CD4-positive, alpha-beta T cell (primary cell): ENCODE measurements at regions of chr13 and their contacts with region 1.

Region 1: GRCh38 chr13:107642831-107643230 is 572.5 kb downstream of the LIG4 start:
- DNase-seq: no peak
- ATAC-seq: no peak
- H3K4me3 ChIP-seq: no peak overlapping the region
- H3K4me3 Mint-ChIP-seq: no peak overlapping the region
- H3K27ac ChIP-seq: no peak overlapping the region
- H3K27ac Mint-ChIP-seq: no peak overlapping the region
- H3K4me1 ChIP-seq: no peaks in the 10 kb centered on the region
- H3K4me1 Mint-ChIP-seq: no peaks in the 10 kb centered on the region
- H3K27me3 ChIP-seq: no peaks in the 10 kb centered on the region
- H3K27me3 Mint-ChIP-seq: no peaks in the 10 kb centered on the region
- CTCF ChIP-seq: no peak

Region 2: GRCh38 chr13:107211073-107211472 is 431.8 kb before region 1 on chr13:
- CTCF ChIA-PET with region 1: no interaction called
- POLR2A ChIA-PET with region 1: no interaction called
- intact Hi-C with region 1: loop called in 1 of 2 experiments (anchors 10 kb)
- DNase-seq: peak in 9 of 14 experiments; percentile 9 to 48 (median 14)
- ATAC-seq: peak; percentile 41
- H3K4me3 ChIP-seq: no peak overlapping the region
- H3K4me3 Mint-ChIP-seq: no peak overlapping the region
- H3K27ac ChIP-seq: no peak overlapping the region
- H3K27ac Mint-ChIP-seq: no peak overlapping the region
- H3K4me1 ChIP-seq: no peaks in the 10 kb centered on the region
- H3K4me1 Mint-ChIP-seq: no peaks in the 10 kb centered on the region
- H3K27me3 ChIP-seq: no peaks in the 10 kb centered on the region
- H3K27me3 Mint-ChIP-seq: peaks cover 5% of the 10 kb centered on the region
- CTCF ChIP-seq: peak; percentile 64

Region 3: DNA sequence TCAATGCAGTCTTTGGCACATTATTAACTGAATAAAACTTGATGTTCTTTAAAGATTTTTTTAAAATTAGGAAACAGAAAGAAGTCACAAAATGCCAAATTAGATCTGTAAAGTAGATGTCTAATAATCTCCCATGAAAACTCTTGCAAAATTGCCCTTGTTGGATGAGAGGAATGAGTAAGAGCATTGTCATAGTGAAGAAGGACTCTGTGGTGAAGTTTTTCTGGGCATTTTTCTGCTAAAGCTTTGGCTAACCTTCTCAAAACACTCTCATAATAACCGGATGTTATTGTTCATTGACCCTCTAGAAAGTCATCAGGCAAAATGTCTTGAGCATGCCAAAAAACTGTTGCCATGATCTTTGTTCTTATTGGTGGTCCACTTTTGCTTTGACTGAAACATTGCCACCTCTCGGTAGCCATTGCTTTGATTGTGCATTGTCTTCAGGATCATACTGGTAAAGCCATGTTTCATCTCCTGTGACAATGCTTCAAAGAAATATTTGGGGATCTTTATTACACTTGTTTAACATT is 23.2 kb after region 1 on chr13:
- CTCF ChIA-PET with region 1: no interaction called
- POLR2A ChIA-PET with region 1: no interaction called
- intact Hi-C with region 1: no loop called
- DNase-seq: no peak
- ATAC-seq: no peak
- H3K4me3 ChIP-seq: no peak overlapping the region
- H3K4me3 Mint-ChIP-seq: no peak overlapping the region
- H3K27ac ChIP-seq: no peak overlapping the region
- H3K27ac Mint-ChIP-seq: no peak overlapping the region
- H3K4me1 ChIP-seq: no peaks in the 10 kb centered on the region
- H3K4me1 Mint-ChIP-seq: no peaks in the 10 kb centered on the region
- H3K27me3 ChIP-seq: no peaks in the 10 kb centered on the region
- H3K27me3 Mint-ChIP-seq: no peaks in the 10 kb centered on the region
- CTCF ChIP-seq: no peak

Region 4: DNA sequence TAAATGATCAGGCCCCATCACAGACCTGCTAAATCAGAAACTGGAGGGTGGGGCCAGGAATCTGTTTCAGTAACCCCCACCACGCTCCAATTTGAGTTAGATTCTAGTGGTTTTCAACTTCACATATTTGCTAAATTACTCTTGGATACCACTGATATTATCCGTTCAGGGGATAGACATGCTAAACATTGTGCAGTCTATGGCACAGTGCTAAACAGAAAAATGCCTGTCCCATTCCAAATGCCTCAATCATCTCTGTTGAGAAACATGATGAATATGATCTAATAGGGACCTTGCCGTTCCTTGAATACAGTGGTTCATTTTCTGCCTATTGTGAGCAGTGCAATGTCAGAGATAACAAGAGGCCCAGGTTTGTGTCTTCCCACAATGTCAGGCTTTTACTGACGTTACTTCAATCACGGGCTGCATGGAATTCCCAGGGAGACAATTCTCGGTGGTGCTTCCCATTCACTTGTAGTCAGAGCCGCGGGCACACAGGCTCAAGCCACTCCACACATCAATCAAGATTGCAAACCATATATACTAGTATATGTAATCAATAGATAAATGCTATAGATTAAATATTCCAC is 1039.2 kb after region 1 on chr13:
- CTCF ChIA-PET with region 1: no interaction called
- POLR2A ChIA-PET with region 1: no interaction called
- intact Hi-C with region 1: no loop called
- DNase-seq: no peak
- ATAC-seq: no peak
- H3K4me3 ChIP-seq: no peak overlapping the region
- H3K4me3 Mint-ChIP-seq: no peak overlapping the region
- H3K27ac ChIP-seq: no peak overlapping the region
- H3K27ac Mint-ChIP-seq: no peak overlapping the region
- H3K4me1 ChIP-seq: no peaks in the 10 kb centered on the region
- H3K4me1 Mint-ChIP-seq: no peaks in the 10 kb centered on the region
- H3K27me3 ChIP-seq: no peaks in the 10 kb centered on the region
- H3K27me3 Mint-ChIP-seq: peaks cover 16% of the 10 kb centered on the region
- CTCF ChIP-seq: no peak